Activated CD4-positive, alpha-beta T cell treated with anti-CD3 and anti-CD28 coated beads for 36 hours (primary cell): ENCODE measurements at regions of chr19 and their contacts with region 1.

Region 1: DNA sequence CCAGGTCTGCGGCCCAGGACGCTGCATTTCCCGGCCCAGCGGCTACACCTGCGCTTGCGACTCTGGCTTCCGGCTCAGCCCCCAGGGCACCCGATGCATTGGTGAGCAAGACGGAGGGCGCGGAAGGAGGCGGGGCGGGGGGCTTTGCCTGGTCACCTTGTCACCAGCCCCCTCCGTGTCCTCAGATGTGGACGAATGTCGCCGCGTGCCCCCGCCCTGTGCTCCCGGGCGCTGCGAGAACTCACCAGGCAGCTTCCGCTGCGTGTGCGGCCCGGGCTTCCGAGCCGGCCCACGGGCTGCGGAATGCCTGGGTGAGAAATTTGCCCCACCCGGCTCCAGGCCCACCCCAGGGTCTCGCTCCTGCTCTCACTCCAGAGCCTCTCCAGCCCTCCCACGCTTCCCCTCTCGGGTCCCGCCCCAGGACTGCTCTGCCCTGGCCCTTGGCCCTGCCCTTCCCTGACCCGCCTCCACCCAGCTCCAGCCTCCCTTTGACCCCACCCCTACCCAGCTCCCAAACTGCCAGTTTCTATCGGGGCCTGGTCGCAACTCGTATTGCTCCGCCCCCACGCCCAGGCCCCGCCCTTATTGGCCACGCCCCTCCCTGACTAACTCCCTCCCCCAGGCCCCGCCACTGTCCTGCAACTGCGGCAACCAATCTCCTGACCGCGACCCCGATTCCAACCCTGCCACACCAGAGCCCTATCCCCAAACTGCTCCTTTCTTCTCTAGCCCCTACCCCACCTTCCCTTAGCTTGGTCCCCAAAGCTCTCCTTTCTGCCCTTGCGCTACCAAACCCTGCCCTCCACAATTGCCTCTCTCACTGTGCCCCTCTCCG is 8.6 kb downstream of the LTBP4 start:
- DNase-seq: peak; percentile 97
- ATAC-seq: peak; percentile 54
- H3K4me3 Mint-ChIP-seq: peak overlapping the region; percentile 69
- H3K27ac Mint-ChIP-seq: peak overlapping the region; percentile 97
- H3K4me1 Mint-ChIP-seq: peaks cover 63% of the 10 kb centered on the region
- H3K27me3 Mint-ChIP-seq: no peaks in the 10 kb centered on the region

Region 2: DNA sequence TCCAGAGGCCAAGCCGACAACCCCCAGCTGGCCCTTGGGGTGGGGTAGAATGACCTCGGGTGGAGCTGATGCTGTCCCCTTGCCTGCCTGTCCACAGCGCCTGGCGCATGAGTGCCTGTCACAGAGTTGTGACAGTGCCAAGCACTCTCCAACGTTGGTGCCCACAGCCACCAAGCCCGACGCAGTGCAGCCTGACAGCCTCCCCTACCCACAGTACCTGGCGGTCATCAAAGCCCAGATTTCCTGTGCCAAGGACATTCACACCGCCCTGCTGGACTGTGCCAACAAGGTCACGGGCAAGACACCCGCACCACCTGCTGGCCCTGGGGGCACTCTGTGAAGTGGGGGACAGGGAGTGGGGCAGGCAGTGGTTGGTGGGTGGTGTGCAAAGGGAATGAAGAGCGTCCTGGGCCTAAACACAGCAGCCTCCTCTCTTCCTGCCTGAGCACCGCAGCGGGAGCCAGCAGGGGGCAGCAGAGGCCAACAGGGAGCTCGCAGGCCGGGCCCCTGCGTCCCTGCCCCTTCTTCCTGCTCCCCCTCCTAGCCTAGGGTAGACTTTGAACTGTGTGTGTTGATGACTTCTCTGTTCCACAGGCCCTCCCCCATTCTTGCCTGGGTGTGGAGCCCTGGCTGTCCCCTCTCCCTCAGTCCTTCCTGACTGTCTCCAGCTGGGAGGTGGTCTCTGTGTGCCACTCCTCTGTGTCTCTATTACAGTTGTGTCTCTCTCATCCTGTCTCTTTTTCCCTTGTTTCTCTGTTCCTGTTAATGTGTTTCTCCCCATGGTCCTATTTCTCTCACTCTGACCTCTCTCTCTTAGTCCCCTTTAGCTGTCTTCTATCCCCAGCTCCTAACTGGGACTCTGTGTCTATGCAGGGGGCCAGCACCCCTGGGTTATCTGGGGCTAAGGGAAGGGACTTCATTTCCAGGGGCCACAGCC is 1212.2 kb before region 1 on chr19:
- CTCF ChIA-PET with region 1: no interaction called
- POLR2A ChIA-PET with region 1: no interaction called
- intact Hi-C with region 1: loop called in 1 of 2 experiments (anchors 10 kb)
- DNase-seq: peak; percentile 97
- ATAC-seq: peak; percentile 58
- H3K4me3 Mint-ChIP-seq: peak overlapping the region; percentile 52
- H3K27ac Mint-ChIP-seq: peak overlapping the region; percentile 97
- H3K4me1 Mint-ChIP-seq: peaks cover 59% of the 10 kb centered on the region
- H3K27me3 Mint-ChIP-seq: no peaks in the 10 kb centered on the region

Region 3: DNA sequence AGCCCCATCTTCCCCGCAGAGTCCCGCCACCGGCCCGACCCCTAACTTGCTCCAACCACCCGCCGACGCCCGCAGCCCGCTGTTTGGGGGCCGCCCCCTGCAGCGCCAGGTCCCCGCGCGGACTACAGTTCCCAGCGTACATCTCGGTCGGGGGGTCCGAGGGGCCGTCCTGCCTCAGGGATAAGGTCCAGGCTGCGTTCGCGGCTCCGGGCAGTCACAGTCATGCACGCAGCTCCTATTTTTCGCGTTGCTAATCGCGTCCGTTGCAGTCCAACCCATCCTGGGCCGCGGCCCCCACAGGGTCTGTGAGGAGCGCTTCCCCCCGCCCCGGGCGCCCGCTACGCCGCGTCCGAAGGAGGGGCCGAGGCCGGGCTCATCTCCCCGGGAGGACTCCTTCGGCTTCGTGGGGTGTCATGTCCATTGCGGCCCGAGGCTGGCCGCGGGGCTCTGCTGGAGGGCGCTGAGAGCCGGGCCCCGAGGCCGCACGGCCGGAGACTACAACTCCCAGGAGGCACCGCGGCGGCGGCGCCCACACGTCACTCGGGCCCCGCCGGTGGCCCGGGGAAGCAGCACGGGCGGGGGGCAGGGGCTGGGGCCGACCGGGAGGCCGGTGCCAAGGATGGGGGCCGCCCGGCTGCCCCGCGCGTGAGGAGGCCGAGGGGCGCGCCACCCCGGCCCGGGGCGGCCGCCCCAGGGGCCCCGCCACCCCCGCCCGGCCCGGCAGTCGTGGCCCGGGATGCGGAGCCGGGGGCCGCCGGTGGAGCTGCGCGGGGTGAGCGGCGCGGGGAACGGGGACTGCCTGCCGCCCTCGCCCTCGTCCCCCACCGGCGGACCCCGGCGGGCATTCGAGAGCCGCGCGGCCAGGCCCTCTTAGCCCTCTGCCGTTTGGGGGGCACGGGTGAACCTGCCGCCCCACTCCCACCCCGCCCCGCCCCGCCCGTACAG is 418.6 kb before region 1 on chr19 and contains the start of gene MAP3K10:
- CTCF ChIA-PET with region 1: no interaction called
- POLR2A ChIA-PET with region 1: no interaction called
- intact Hi-C with region 1: loop called in 1 of 2 experiments (anchors 1 kb)
- DNase-seq: peak; percentile 89
- ATAC-seq: peak; percentile 88
- H3K4me3 Mint-ChIP-seq: peak within 1 kb of the TSS; percentile 80
- H3K27ac Mint-ChIP-seq: peak within 1 kb of the TSS; percentile 92
- H3K4me1 Mint-ChIP-seq: peaks cover 20% of the 10 kb centered on the region
- H3K27me3 Mint-ChIP-seq: no peaks in the 10 kb centered on the region
- total RNA-seq, gene MAP3K10: 8.7 to 10.8 TPM

Region 4: DNA sequence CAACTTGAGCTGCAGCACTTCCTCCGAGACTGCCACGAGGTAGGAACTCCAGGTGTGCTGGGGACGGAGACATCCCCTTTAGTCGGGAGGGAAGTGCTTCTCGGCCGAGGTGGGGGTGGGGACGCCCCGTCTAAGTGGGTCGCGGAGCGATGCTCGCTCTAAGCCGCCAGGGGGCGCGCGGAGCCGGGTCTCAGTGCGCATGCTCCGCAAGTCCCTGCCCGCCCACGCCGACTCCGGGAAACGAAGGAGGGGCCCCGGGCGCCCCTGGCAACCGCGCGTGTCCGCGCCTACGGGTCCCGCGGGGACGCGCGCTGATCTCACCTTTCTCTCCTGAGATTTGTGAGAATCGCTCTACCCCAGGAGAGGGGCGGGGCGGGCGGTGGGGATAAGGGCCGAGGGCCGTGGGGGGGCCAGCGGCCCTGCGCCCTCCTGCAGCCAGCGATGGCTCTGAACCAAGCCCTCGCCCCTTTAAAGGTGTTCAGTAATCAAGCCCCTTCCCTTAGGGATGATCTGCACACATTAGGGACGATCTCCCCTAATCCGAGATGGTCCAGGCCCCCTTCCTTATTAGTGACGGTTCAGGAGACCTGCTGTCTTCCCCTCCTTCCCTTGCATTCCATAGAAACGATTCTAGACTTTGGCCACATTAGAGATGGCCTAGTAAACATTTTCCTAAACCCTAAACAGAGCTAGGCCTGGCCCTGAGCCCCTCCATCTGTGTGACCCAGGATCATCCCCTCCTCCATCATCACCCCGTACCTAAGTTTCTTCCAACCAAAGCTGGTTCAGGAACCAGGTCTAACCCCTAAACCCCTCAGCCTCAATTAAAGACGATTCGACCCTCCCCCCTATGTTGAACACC is 80.5 kb before region 1 on chr19:
- CTCF ChIA-PET with region 1: no interaction called
- POLR2A ChIA-PET with region 1: no interaction called
- intact Hi-C with region 1: loop called in 1 of 2 experiments (anchors 1 kb)
- DNase-seq: peak; percentile 95
- ATAC-seq: peak; percentile 75
- H3K4me3 Mint-ChIP-seq: peak overlapping the region; percentile 47
- H3K27ac Mint-ChIP-seq: no peak overlapping the region
- H3K4me1 Mint-ChIP-seq: peaks cover 11% of the 10 kb centered on the region
- H3K27me3 Mint-ChIP-seq: peaks cover 19% of the 10 kb centered on the region

Region 5: GRCh38 chr19:40633207-40633606 is 23.4 kb after region 1 on chr19:
- CTCF ChIA-PET with region 1: interaction called, 24 read pairs
- POLR2A ChIA-PET with region 1: interaction called, 5 read pairs
- intact Hi-C with region 1: loop called in 1 of 2 experiments (anchors 2 kb)
- DNase-seq: no peak
- ATAC-seq: no peak
- H3K4me3 Mint-ChIP-seq: no peak overlapping the region
- H3K27ac Mint-ChIP-seq: no peak overlapping the region
- H3K4me1 Mint-ChIP-seq: peaks cover 15% of the 10 kb centered on the region
- H3K27me3 Mint-ChIP-seq: peaks cover 5% of the 10 kb centered on the region

Region 6: GRCh38 chr19:40662921-40663694 is 53.3 kb after region 1 on chr19:
- CTCF ChIA-PET with region 1: no interaction called
- POLR2A ChIA-PET with region 1: no interaction called
- intact Hi-C with region 1: no loop called
- DNase-seq: peak; percentile 96
- ATAC-seq: peak; percentile 81
- H3K4me3 Mint-ChIP-seq: peak overlapping the region; percentile 66
- H3K27ac Mint-ChIP-seq: peak overlapping the region; percentile 77
- H3K4me1 Mint-ChIP-seq: peaks cover 19% of the 10 kb centered on the region
- H3K27me3 Mint-ChIP-seq: no peaks in the 10 kb centered on the region

Region 7: DNA sequence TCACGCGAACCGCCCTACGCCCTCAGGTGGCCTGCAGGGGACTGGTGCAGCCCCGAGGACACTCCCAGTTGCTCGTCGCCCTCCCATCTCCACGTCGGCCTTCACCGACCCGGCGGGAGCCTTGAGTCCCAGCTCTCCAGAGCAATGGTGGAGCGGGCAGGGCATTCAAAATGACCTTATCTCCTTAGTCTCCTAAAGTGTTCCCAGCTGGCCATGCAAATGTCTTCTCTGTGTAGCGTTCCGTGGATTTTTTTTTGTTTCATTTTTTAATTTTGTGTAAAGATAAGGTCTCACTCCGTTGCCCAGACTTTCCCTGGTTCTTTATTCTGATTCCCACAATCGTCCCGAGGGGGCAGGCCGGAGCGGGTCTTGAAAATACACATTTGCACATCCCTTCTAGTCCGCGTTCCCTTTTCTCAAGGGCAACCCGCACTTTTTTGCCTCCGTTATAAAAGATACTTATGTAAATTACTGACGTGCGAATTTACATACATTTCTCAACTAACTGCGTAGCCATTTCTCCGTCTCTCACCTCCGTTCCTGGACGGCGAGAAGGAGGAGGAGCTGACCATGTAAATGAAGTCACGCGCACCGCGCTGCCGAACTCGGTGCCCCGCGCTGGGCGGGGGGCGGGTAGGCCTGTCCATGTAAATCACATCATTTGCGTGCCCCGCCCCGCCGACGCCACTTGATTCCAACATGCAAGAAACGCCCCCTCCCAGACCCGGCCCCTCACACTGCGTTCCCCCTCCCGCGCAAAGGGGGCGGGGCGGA is 188.6 kb after region 1 on chr19:
- CTCF ChIA-PET with region 1: interaction called, 3 read pairs
- POLR2A ChIA-PET with region 1: interaction called, 4 read pairs
- intact Hi-C with region 1: loop called in 1 of 2 experiments (anchors 1 kb)
- DNase-seq: peak; percentile 100
- ATAC-seq: peak; percentile 82
- H3K4me3 Mint-ChIP-seq: peak overlapping the region; percentile 91
- H3K27ac Mint-ChIP-seq: peak overlapping the region; percentile 97
- H3K4me1 Mint-ChIP-seq: peaks cover 49% of the 10 kb centered on the region
- H3K27me3 Mint-ChIP-seq: no peaks in the 10 kb centered on the region

Region 8: DNA sequence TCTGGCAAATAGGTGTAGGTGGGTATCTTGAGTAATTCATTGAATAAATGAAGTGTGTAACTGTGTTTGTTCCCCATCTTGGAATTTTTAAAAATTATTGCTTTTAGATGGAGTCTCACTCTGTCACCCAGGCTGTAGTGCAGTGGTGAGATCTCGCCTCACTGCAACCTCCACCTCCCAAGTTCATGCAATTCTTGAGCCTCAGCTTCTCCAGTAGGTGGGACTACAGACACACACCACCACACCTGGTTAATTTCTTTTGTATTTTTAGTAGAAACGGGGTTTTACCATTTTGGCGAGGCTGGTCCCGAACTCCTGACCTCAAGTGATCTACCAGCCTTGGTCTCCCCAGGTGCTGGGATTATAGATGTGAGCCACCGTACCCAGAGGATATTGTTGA is 248.3 kb after region 1 on chr19:
- CTCF ChIA-PET with region 1: no interaction called
- POLR2A ChIA-PET with region 1: no interaction called
- intact Hi-C with region 1: no loop called
- DNase-seq: no peak
- ATAC-seq: no peak
- H3K4me3 Mint-ChIP-seq: no peak overlapping the region
- H3K27ac Mint-ChIP-seq: no peak overlapping the region
- H3K4me1 Mint-ChIP-seq: no peaks in the 10 kb centered on the region
- H3K27me3 Mint-ChIP-seq: peaks cover 2% of the 10 kb centered on the region